Activated T-helper 2 cell treated with anti-CD3 and anti-CD28 coated beads, Interferon-gamma antibody, Interleukin-2, Interleukin-4, amounts not matched to agents 10 μg/mL and 5 μg/mL and 100 μg/mL, durations not matched to agents 14 hours and 24 hours and 36 hours (primary cell): ENCODE measurements at regions of chr17 and their contacts with region 1.

Region 1: GRCh38 chr17:38853292-38854219 is at the start of gene RPL23:
- DNase-seq: peak; percentile 90
- H3K4me3 Mint-ChIP-seq: peak within 1 kb of the TSS; percentile 98
- H3K27ac Mint-ChIP-seq: peak within 1 kb of the TSS; percentile 98
- H3K4me1 Mint-ChIP-seq: peaks cover 26% of the 10 kb centered on the region
- H3K27me3 Mint-ChIP-seq: no peaks in the 10 kb centered on the region
- total RNA-seq, gene RPL23: 1,775 and 1,796 TPM in 2 replicates

Region 2: DNA sequence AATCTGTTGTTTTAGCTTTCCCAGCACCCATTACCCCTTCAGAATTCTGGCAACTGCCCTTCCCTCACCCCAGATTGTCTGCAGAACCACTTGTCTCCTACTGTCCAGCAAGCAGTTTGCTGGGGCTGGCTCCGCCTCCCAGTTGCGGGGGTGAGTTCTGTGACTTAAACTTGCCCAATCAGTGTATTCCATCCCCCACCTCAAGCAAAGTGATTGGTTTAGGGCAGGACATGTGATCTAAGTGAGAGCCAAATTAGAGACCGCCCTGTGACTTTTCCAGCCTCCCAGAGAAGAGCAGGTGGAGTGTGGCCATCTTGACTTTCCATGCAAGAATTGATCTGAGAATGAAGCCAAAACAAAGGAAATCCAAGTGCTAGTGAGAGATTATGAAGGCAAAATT is 225.1 kb before region 1 on chr17:
- intact Hi-C with region 1: no loop called
- DNase-seq: no peak
- H3K4me3 Mint-ChIP-seq: no peak overlapping the region
- H3K27ac Mint-ChIP-seq: no peak overlapping the region
- H3K4me1 Mint-ChIP-seq: peaks cover 1% of the 10 kb centered on the region
- H3K27me3 Mint-ChIP-seq: peaks cover 15% of the 10 kb centered on the region

Region 3: GRCh38 chr17:38777641-38778250 is 75.8 kb before region 1 on chr17:
- intact Hi-C with region 1: no loop called
- DNase-seq: no peak
- H3K4me3 Mint-ChIP-seq: no peak overlapping the region
- H3K27ac Mint-ChIP-seq: no peak overlapping the region
- H3K4me1 Mint-ChIP-seq: no peaks in the 10 kb centered on the region
- H3K27me3 Mint-ChIP-seq: no peaks in the 10 kb centered on the region

Region 4: GRCh38 chr17:38824899-38825761 is 28.4 kb before region 1 on chr17 and contains the start of gene CWC25:
- intact Hi-C with region 1: loop called (anchors 1 kb)
- DNase-seq: peak; percentile 97
- H3K4me3 Mint-ChIP-seq: peak within 1 kb of the TSS; percentile 98
- H3K27ac Mint-ChIP-seq: peak within 1 kb of the TSS; percentile 99
- H3K4me1 Mint-ChIP-seq: peaks cover 20% of the 10 kb centered on the region
- H3K27me3 Mint-ChIP-seq: no peaks in the 10 kb centered on the region
- total RNA-seq, gene CWC25: 23.0 and 26.4 TPM in 2 replicates